Activated T-helper 1 cell treated with anti-CD3 and anti-CD28 coated beads, Interleukin-12 subunit alpha, Interleukin-12 subunit beta, Interleukin-2, Interleukin-4 antibody, amounts not matched to agents 30 ng/mL and 10 ng/mL and 1 ng/mL, durations not matched to agents 14 hours and 24 hours and 36 hours (primary cell): ENCODE measurements at regions of chr13 and their contacts with region 1.

Region 1: GRCh38 chr13:50081679-50082425 is 66.6 kb downstream of the KCNRG start:
- DNase-seq: peak; percentile 99
- H3K4me3 Mint-ChIP-seq: peak overlapping the region; percentile 97
- H3K27ac Mint-ChIP-seq: peak overlapping the region; percentile 100
- H3K4me1 Mint-ChIP-seq: peaks cover 48% of the 10 kb centered on the region
- H3K27me3 Mint-ChIP-seq: no peaks in the 10 kb centered on the region

Region 2: DNA sequence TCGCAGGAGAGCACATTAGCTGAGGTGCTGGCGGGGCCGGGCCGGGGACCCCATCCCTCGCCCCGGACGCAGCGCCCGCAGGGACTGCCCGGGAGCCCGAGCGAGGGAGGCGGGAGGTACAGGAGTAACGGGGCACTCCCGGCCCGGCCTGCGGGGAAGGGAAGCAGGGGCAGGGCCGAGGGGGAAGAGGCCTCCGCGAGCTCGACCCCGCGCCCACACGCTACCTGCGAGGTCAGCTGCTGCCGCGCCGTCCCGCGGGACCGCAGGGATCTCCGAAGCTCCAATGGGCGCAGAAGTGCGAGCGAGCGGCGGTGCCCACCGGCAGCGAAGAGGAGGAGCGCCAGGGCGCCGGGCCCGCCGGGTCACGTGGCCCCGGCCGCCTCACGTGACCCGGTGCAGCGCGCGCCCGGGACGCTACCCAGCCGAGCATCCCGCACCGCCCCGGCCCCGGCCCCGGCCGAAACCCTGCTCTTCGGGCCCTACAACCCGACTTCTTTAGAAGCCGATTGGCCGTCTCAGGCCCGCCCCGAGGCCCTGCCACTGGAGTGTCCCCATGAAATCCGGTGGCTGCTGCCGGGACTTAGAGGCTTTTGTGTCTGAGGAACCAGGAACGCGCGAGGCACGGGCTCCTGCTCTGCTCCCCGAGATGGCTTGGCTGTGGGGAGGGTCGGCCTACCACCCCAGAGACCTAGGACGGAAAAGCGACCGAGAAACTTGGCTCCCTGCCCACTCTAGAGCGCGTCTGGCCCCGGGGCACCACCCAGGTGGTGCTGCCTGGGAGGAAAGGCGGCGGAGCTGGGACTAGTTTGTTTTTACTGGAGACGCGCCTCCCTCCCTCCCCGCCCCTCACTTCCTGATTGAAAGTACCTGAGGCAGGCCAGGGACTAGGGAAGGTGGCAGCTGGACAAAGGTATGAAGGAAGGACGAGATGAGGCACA is 496.4 kb before region 1 on chr13 and contains the start of gene RCBTB1:
- intact Hi-C with region 1: loop called (anchors 5 kb)
- DNase-seq: peak; percentile 60
- H3K4me3 Mint-ChIP-seq: peak within 1 kb of the TSS; percentile 90
- H3K27ac Mint-ChIP-seq: peak within 1 kb of the TSS; percentile 93
- H3K4me1 Mint-ChIP-seq: peaks cover 20% of the 10 kb centered on the region
- H3K27me3 Mint-ChIP-seq: peaks cover 2% of the 10 kb centered on the region
- total RNA-seq, gene RCBTB1: 14.9 and 16.3 TPM in 2 replicates

Region 3: DNA sequence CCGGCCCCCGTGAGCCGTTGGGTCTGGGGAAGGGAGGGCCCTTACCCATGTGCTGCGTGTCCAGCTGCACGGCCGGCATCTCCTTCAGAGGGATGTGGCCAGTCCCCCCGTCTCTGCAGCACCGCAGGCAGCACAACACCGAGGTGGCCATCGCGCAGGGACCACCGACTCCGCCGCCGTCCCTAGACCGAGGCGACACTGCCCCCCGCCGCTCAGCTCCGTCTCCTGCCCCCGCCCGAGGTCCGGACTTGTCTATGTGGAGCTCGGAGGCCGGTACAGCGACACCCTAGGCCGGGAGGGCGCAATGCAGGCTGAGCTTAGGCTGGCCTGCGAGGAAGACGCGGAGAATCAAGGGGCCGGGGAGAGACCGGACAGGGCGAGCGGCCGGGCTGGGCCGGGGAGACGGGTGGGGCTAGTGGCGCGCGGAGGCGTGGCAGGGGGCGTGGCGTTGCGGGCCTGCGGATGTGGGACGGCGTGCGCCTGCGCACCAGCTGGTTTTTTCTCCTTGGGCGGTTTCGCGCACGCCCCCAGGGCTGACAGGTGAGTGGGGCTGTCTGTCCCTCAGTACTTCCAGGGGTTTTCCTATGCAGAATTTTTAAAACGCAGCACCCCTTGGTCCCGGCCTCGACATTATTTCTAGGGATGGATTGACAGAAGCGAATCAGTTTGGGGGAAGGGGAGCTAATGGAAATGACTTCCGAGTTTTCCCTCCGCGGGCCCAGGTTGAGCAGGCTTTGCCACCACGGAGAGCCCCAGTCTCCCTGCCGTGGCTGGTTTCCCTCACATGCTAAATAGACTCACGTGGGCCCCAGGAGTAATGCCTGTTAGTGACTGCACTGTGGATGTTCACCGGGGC is 145.5 kb before region 1 on chr13 and contains the start of gene SPRYD7:
- intact Hi-C with region 1: loop called (anchors 1 kb)
- DNase-seq: peak; percentile 92
- H3K4me3 Mint-ChIP-seq: peak within 1 kb of the TSS; percentile 94
- H3K27ac Mint-ChIP-seq: peak within 1 kb of the TSS; percentile 87
- H3K4me1 Mint-ChIP-seq: peaks cover 11% of the 10 kb centered on the region
- H3K27me3 Mint-ChIP-seq: peaks cover 22% of the 10 kb centered on the region
- total RNA-seq, gene SPRYD7: 6.9 and 7.0 TPM in 2 replicates

Region 4: DNA sequence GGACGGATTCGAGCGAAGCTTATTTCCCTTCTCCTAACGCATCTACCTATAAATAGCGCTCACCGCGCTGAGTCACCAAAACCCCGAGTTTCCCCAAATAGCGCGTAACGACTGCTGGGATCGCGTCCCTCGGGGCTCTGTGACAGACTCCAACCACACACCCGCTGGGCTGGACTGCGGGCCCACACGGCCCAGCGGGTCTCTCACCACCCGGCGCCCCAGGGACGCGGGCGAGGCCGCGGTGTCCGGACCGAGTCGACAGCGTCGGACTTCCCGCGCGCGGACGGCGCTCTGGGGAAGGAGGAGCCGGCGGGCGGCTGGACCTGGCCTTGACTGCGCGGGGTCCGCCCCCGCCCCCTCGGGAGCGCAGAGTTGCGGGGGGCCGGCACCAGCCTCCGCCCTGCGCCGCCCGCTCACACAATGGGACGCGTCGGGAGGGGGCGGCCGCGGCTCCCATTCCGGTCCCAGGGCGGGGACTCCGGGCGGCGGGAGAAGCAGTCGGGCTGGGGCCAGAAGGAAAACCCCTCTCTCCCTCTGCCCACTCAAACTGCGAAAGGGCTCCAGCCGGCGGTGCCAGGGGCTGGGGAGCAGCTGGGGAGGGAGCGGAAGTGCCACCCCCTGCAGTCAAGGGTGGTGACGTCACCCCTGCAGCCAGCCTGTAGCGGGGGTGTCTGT is 42.1 kb after region 1 on chr13:
- intact Hi-C with region 1: loop called (anchors 1 kb)
- DNase-seq: peak; percentile 62
- H3K4me3 Mint-ChIP-seq: peak overlapping the region; percentile 88
- H3K27ac Mint-ChIP-seq: peak overlapping the region; percentile 91
- H3K4me1 Mint-ChIP-seq: peaks cover 50% of the 10 kb centered on the region
- H3K27me3 Mint-ChIP-seq: peaks cover 1% of the 10 kb centered on the region

Region 5: GRCh38 chr13:50244713-50245574 is 163.1 kb after region 1 on chr13:
- intact Hi-C with region 1: loop called (anchors 1 kb)
- DNase-seq: peak; percentile 53
- H3K4me3 Mint-ChIP-seq: peak overlapping the region; percentile 20
- H3K27ac Mint-ChIP-seq: peak overlapping the region; percentile 73
- H3K4me1 Mint-ChIP-seq: peaks cover 56% of the 10 kb centered on the region
- H3K27me3 Mint-ChIP-seq: peaks cover 21% of the 10 kb centered on the region

Region 6: GRCh38 chr13:50529154-50529882 is 447.5 kb after region 1 on chr13:
- intact Hi-C with region 1: loop called (anchors 1 kb)
- DNase-seq: no peak
- H3K4me3 Mint-ChIP-seq: no peak overlapping the region
- H3K27ac Mint-ChIP-seq: peak overlapping the region; percentile 59
- H3K4me1 Mint-ChIP-seq: peaks cover 45% of the 10 kb centered on the region
- H3K27me3 Mint-ChIP-seq: peaks cover 19% of the 10 kb centered on the region

Region 7: DNA sequence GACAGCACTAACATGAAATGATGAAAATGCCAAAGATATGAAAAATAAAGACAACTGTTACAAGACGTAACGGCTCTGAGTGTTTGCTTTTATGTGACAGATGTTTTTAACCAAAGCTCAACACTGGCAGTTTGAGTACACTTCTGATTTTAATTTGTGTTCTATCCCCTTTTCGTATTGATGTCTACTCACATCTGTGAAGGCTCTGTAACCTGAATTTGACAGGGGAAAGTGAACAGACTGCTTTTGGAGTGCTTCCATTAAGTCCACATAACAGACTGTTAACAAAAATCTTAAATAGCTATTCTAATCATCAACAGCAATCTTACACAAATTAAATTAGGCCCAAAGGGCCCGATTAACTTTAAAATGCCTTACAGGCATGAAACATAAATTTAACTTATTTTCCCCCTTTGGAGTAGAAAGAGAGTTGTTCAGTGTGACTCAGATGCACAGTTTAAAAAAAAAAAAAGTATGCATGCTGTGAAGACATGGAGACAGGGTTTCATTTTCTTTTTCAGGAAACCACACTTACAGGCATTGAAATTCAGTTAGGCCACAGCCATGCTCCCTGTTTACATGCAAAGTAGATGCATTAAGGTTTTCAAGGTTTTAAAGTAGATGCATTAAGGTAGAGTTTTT is 811.5 kb after region 1 on chr13:
- intact Hi-C with region 1: loop called (anchors 5 kb)
- DNase-seq: peak; percentile 40
- H3K4me3 Mint-ChIP-seq: peak overlapping the region; percentile 77
- H3K27ac Mint-ChIP-seq: peak overlapping the region; percentile 87
- H3K4me1 Mint-ChIP-seq: peaks cover 49% of the 10 kb centered on the region
- H3K27me3 Mint-ChIP-seq: no peaks in the 10 kb centered on the region